IMR-90 (cell line): ENCODE measurements at regions of chr6 and their contacts with region 1.

Region 1: DNA sequence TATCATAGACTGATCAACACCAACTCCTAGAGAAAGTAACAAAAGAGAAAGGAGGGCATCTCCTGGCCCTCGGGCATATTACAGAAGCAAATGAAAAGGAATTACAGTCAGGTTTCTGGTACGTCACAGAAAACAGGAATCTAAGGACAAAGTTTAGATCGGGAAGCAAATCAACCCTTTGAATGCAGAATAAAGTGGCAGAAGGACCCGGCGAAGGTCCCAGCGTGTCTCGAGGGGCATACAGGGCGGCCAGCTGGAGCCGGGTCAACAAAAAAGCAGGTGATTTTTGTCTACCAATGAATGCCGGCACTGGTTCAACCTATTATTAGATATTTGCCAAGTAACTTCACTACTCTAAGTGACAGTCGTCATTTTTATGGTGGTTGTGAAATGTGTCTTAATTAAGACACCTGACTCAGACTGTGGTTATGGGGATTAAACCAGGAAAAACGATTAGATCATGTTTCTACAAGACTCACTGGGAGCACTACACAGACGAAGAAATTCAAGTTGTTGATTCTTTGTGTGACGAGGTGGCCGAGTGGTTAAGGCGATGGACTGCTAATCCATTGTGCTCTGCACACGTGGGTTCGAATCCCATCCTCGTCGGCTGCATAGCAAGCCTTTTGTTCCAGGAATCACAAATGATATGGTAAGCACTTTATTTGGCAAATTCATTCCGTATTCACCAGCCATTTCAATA is 12.4 kb upstream of the ZSCAN9 start:
- DNase-seq: peak; percentile 90
- ATAC-seq: peak; percentile 92
- H3K4me3 ChIP-seq: peak overlapping the region; percentile 58
- H3K27ac ChIP-seq: no peak overlapping the region
- H3K4me1 ChIP-seq: no peaks in the 10 kb centered on the region
- H3K27me3 ChIP-seq: peaks cover 24% of the 10 kb centered on the region
- CTCF ChIP-seq: peak; percentile 33; the same call in 1 of the 2 replicates
- POLR2A ChIP-seq: no peak
- RAD21 ChIP-seq: peak; percentile 35

Region 2: DNA sequence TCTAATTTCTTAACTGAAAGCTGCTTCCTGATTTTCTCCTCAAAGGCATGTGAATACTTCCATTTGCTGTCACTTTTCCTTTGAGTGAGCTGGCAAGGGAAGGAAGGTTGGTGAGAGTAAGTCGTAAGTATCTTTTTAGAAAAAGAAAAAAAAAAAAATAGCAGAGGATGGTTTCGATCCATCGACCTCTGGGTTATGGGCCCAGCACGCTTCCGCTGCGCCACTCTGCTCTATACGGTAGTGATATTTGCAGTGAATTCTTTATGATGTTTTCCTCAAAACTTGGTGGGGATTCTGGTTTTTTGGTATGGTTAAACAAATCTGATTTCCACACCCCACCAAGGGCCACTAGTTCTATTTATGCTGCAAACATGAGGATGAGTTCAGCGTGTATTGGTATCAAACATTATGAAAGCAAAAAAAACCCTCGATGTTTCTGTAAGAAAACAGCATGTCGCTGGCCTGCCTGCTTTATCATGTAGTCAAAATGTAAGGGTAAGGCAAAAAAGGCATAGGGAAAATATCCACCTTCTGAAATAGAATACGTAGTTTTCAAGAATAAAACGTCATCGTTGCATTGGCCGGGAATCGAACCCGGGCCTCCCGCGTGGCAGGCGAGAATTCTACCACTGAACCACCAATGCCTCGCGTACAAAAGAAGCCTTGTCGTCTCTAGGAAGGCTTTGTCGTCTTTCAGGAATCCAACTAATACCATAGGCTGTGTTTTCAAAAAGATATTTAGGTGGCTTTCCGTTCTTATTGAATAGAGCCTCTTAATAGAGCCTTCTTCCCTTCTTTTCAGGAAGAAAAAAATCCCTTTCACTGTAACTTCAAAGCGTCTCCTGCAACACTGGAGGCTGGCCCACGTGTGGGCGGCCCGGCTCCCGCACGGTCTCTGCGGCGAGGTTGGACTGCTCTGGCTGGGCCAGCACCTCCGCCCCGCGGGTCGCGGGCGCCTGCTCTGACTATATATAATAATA is 310.0 kb before region 1 on chr6:
- CTCF ChIA-PET with region 1: no interaction called
- POLR2A ChIA-PET with region 1: no interaction called
- dilution Hi-C with region 1: no loop called
- in situ Hi-C with region 1: no loop called
- intact Hi-C with region 1: loop called (anchors 5 kb)
- DNase-seq: peak; percentile 78
- ATAC-seq: peak; percentile 94
- H3K4me3 ChIP-seq: peak overlapping the region; percentile 66
- H3K27ac ChIP-seq: no peak overlapping the region
- H3K4me1 ChIP-seq: no peaks in the 10 kb centered on the region
- H3K27me3 ChIP-seq: no peaks in the 10 kb centered on the region
- CTCF ChIP-seq: no peak
- POLR2A ChIP-seq: no peak
- RAD21 ChIP-seq: no peak

Region 3: GRCh38 chr6:28080631-28081485 is 131.8 kb before region 1 on chr6:
- CTCF ChIA-PET with region 1: no interaction called
- POLR2A ChIA-PET with region 1: no interaction called
- dilution Hi-C with region 1: no loop called
- in situ Hi-C with region 1: no loop called
- intact Hi-C with region 1: loop called (anchors 5 kb)
- DNase-seq: peak; percentile 98
- ATAC-seq: peak; percentile 98
- H3K4me3 ChIP-seq: peak overlapping the region; percentile 75
- H3K27ac ChIP-seq: peak overlapping the region; percentile 83
- H3K4me1 ChIP-seq: peaks cover 2% of the 10 kb centered on the region; the same call in 1 of the 2 replicates
- H3K27me3 ChIP-seq: no peaks in the 10 kb centered on the region
- CTCF ChIP-seq: no peak
- POLR2A ChIP-seq: peak; percentile 14; the same call in 1 of the 2 replicates
- RAD21 ChIP-seq: no peak

Region 4: DNA sequence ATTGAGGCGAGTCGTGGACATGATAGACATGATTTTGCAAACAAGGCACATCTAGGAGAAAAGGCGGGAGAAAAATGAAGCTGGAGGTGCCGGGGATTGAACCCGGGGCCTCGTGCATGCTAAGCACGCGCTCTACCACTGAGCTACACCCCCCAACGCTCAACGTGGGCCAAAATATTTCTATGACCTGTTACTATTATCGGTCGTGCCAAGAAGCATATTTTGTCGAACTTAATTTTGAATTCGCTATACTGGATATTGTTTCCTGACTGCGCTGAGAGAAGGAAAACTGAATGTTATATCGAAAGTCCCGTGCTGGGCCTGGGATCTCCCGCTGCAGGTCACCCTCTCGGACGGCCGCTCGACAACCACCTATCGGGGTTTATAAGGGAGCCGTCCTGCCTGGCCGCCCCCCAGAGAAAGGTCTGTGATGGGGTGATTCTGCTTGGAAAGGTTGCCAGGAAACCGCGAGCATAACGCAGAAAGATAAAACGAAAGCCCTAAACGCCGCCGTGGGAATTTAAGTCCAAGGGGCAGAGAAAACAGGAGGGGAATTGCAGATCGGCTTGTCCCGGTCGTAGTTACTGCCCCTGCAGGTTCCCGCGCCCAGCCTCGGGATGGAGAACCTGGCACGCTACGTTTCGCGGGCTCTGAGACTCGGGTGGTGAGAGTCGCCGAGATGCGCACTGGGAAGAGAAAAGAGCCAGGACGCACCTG is 651.1 kb after region 1 on chr6:
- CTCF ChIA-PET with region 1: no interaction called
- POLR2A ChIA-PET with region 1: no interaction called
- dilution Hi-C with region 1: no loop called
- in situ Hi-C with region 1: no loop called
- intact Hi-C with region 1: loop called (anchors 5 kb)
- DNase-seq: peak; percentile 82
- ATAC-seq: peak; percentile 86
- H3K4me3 ChIP-seq: peak overlapping the region; percentile 87
- H3K27ac ChIP-seq: no peak overlapping the region
- H3K4me1 ChIP-seq: 0 out of 2 replicates have a peak, but pooled peaks cover 2% of the 10 kb centered on the region
- H3K27me3 ChIP-seq: no peaks in the 10 kb centered on the region
- CTCF ChIP-seq: no peak
- POLR2A ChIP-seq: no peak
- RAD21 ChIP-seq: no peak